Panc1 (cell line): ENCODE measurements at regions of chr20 and their contacts with region 1.

Region 1: GRCh38 chr20:33337531-33338165 is 54.6 kb downstream of the BPIFB1 start:
- DNase-seq: no peak
- ATAC-seq: no peak
- H3K4me3 ChIP-seq: no peak overlapping the region
- H3K27ac ChIP-seq: no peak overlapping the region
- H3K4me1 ChIP-seq: no peaks in the 10 kb centered on the region
- H3K27me3 ChIP-seq: no peaks in the 10 kb centered on the region
- CTCF ChIP-seq: no peak

Region 2: DNA sequence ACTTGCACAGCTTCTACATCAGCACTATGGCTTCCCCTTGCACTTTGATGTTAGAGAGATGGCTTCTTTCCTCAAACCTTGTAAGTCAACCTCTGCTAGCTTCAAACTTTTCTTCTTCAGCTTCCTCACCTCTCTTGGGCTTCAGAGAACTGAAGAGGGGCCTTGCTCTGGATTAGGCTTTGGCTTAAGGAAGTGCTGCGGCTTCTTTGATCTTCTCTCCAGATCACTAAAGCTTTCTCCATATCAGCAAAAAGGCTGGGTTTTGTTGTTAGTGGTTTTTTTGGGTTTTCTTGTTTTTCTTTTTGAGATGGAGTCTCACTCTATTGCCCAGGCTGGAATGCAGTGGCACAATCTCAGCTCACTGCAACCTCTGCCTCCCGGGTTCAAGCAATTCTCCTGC is 39.7 kb after region 1 on chr20:
- CTCF ChIA-PET with region 1: no interaction called
- POLR2A ChIA-PET with region 1: no interaction called
- in situ Hi-C with region 1: no loop called
- intact Hi-C with region 1: no loop called
- DNase-seq: no peak
- ATAC-seq: no peak
- H3K4me3 ChIP-seq: no peak overlapping the region
- H3K27ac ChIP-seq: no peak overlapping the region
- H3K4me1 ChIP-seq: peaks cover 19% of the 10 kb centered on the region
- H3K27me3 ChIP-seq: no peaks in the 10 kb centered on the region
- CTCF ChIP-seq: no peak

Region 3: DNA sequence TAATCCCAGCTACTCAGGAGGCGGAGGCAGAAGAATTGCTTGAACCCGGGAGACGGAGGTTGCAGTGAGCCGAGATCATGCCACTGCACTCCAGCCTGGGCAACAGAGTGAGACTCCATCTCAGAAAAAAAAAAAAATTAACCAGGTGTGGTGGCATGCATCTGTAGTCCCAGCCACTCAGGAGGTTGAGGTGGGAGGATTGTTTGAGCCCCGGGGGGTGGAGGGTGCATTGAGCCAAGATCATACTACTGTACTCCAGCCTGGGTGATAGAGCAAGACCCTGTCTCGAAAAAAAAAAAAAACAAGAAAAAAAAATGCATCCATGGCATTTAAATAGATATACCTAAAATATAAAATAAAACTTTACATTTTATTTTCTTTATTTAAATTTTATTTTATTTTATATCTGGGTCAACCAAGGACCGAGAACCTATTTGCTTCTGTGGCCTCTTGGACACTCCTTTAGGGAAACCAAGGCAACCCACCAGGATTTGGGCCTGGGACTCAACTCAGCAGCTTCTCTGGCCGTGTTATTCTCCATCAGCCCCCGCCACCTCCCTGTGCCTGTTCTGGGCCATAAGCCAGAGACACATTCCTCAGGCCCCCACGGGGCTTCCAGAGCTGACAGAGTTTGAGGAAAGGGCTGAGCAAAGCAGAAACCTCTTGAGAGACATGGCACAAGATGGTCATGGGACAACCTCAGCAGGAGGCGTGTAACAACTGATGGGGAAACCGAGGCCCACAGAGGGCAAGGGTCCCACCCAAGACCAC is 99.7 kb after region 1 on chr20:
- CTCF ChIA-PET with region 1: no interaction called
- POLR2A ChIA-PET with region 1: interaction called, 12 read pairs
- in situ Hi-C with region 1: no loop called
- intact Hi-C with region 1: no loop called
- DNase-seq: no peak
- ATAC-seq: no peak
- H3K4me3 ChIP-seq: no peak overlapping the region
- H3K27ac ChIP-seq: no peak overlapping the region
- H3K4me1 ChIP-seq: no peaks in the 10 kb centered on the region
- H3K27me3 ChIP-seq: no peaks in the 10 kb centered on the region
- CTCF ChIP-seq: no peak

Region 4: DNA sequence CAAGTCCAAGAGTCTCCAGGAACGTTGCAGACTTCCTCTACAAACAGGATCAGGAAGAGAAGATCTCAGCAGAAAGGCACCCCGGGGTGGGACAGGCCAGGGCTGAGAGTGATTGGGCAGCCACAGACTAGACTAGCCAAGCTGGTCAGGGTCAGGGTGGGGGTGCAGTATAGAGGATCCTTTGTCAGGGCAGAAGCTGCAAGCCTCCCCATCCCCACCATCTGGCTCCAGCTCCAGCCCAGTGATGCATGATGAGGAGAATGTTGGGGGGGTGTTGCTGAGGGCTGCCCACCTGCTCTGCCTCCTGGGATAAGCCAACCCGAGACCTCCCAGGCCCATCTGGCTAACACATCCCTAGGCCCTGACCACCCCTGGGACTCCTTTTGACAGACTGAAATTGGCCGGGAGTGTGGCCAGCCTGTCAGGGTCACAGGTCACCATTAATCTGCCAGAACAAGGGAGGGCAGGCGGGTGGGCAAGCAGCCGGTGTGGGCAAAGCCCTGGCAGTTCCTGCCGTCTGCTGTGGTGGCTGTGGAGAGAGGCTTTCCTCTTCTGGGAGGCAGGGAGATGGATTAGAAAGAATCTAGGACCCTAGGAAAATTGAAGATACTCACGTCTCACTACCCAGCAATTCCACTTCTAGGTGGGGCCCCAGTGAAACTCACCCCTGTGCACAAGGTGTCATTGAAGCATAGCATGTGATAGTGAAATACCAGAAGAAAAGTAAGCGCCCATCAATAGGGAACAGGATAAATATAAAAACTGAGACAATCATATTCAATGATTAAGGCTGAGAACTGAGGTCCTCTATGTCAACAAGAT is 128.0 kb after region 1 on chr20:
- CTCF ChIA-PET with region 1: no interaction called
- POLR2A ChIA-PET with region 1: no interaction called
- in situ Hi-C with region 1: no loop called
- intact Hi-C with region 1: no loop called
- DNase-seq: no peak
- ATAC-seq: no peak
- H3K4me3 ChIP-seq: no peak overlapping the region
- H3K27ac ChIP-seq: no peak overlapping the region
- H3K4me1 ChIP-seq: no peaks in the 10 kb centered on the region
- H3K27me3 ChIP-seq: no peaks in the 10 kb centered on the region
- CTCF ChIP-seq: no peak

Region 5: DNA sequence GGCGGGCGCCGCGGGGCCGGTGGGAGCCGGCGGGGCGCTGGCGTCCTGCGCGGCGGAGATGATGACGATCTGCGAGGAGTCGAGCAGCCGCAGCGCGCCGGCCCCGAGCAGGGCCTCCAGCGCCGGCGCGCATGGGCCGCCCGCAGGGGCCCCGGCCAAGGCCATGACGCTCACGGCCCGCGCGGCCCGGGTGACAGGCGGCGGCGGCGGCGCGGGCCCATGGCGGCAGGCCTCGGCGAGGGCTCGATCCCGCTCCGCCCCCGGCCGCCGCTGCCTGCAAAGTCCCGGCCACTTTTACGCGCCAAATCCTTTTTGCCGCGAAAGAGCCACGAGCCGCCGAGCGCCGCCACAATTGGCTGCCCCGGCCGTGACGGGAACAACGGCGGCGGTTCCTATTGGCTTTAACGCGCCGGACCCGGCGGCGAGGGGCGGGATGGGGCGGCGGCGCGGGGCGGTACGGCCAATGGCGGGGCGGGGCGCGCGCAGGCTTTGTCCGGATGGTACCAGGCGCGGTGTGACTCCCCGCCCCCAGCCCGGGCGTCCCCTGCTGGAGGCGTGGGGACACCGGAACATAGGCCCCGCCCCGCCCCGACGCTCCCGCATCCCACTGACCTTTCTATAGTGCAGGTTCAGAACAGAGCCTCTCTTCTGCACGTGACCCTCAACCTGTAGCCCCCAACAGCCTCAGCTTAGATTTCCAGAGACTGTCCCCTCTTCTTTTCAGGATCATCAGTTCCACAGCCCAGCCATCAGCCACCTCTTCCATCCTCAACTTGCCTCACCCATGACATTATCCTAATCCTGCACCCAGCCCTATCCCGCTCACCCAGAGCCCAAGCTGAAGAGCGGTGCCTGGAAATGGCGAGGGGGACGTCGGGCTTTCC is 348.7 kb after region 1 on chr20 and contains the start of gene E2F1:
- CTCF ChIA-PET with region 1: no interaction called
- POLR2A ChIA-PET with region 1: no interaction called
- in situ Hi-C with region 1: no loop called
- intact Hi-C with region 1: no loop called
- DNase-seq: peak; percentile 28
- ATAC-seq: peak; percentile 97
- H3K4me3 ChIP-seq: peak within 1 kb of the TSS; percentile 58 to 83
- H3K27ac ChIP-seq: peak within 1 kb of the TSS; percentile 87
- H3K4me1 ChIP-seq: peaks cover 6% of the 10 kb centered on the region
- H3K27me3 ChIP-seq: no peaks in the 10 kb centered on the region
- CTCF ChIP-seq: no peak; the same call in 1 of the 2 replicates
- total RNA-seq, gene E2F1: 64.2 TPM